ENCODE measurements at regions of chr17 and their contacts with region 1.

Region 1: GRCh38 chr17:80147035-80147836 is at the start of gene EIF4A3:
- DNase-seq: peak; percentile 95
- ATAC-seq: peak; percentile 88
- H3K4me3 Mint-ChIP-seq: peak within 1 kb of the TSS; percentile 98
- H3K27ac Mint-ChIP-seq: peak within 1 kb of the TSS; percentile 90
- H3K4me1 Mint-ChIP-seq: peaks cover 42% of the 10 kb centered on the region
- H3K27me3 Mint-ChIP-seq: no peaks in the 10 kb centered on the region
- CTCF ChIP-seq: no peak
- total RNA-seq, gene EIF4A3: 84.0 and 88.1 TPM in 2 replicates

Region 2: DNA sequence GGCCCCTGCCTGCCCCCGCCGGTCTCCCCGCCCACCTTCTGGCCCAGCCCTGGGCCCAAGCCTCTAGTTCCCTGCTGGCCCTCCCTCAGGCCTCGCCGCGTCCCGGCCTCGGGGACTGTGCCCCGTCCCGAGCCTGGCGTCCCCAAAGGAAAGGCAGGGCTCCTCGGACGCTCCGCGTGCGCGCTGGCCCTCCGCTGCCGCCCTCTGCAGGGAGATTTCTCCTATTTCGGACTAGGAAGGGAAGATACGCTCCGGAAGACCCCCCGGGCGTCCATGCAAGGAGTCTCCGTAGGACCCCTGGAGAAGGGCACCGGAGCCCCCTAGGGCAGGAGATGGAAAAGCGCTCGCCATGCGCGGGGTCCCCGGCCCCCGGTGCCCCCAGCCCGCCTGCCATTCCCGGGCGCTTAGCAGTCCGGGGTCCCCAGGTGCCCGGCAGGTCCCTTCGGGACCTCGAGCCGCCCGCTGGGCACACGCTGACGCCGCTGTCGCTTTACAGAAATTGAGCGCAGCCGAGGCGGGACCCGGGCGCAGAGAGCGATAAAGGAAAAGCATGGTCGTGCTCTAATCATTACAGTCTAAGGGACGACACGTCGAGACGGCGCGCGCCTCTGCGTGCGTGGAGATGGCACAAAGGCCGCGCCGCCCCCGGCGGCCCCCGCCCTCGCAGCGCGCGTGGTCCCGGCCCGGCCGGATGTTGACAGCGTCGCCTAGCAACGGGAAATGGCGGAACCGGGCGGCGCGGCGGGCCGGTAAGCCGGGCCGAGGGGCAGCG is 111.1 kb before region 1 on chr17 and contains the start of gene CCDC40:
- CTCF ChIA-PET with region 1: no interaction called
- POLR2A ChIA-PET with region 1: no interaction called
- intact Hi-C with region 1: loop called (anchors 2 kb)
- DNase-seq: peak; percentile 80
- ATAC-seq: peak; percentile 83
- H3K4me3 Mint-ChIP-seq: peak within 1 kb of the TSS; percentile 89
- H3K27ac Mint-ChIP-seq: peak within 1 kb of the TSS; percentile 86
- H3K4me1 Mint-ChIP-seq: peaks cover 15% of the 10 kb centered on the region
- H3K27me3 Mint-ChIP-seq: peaks cover 3% of the 10 kb centered on the region
- CTCF ChIP-seq: no peak
- total RNA-seq, gene CCDC40: 0.46 and 0.55 TPM in 2 replicates

Region 3: DNA sequence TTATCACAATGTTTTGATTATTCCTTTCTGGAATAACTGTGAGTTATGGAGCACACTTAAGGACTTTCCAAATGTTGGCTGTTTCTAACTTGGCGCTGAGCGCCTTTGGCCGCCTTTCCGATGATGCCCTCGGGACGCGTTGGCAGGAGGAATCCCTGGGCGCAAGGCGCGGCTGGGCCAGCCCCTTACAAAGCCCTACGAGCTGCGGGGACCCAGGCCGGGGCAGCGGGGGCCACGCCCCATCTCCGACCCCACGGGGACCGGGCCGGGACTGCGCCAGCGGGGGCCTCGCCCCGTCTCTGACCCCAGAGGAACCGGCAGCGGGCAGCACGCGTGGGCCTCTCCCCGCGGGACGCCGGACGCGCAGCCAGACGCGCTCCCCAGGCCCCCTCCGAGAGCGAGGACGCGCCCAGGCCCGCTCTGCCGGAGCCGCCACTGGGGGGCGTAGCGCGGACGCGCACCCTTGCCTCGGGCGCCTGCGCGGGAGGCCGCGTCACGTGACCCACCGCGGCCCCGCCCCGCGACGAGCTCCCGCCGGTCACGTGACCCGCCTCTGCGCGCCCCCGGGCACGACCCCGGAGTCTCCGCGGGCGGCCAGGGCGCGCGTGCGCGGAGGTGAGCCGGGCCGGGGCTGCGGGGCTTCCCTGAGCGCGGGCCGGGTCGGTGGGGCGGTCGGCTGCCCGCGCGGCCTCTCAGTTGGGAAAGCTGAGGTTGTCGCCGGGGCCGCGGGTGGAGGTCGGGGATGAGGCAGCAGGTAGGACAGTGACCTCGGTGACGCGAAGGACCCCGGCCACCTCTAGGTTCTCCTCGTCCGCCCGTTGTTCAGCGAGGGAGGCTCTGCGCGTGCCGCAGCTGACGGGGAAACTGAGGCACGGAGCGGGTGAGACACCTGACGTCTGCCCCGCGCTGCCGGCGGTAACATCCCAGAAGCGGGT is 46.0 kb before region 1 on chr17 and contains the start of gene GAA:
- CTCF ChIA-PET with region 1: interaction called, 7 read pairs
- POLR2A ChIA-PET with region 1: interaction called, 11 read pairs
- intact Hi-C with region 1: loop called (anchors 1 kb)
- DNase-seq: peak; percentile 96
- ATAC-seq: peak; percentile 90
- H3K4me3 Mint-ChIP-seq: peak within 1 kb of the TSS; percentile 86
- H3K27ac Mint-ChIP-seq: peak within 1 kb of the TSS; percentile 83
- H3K4me1 Mint-ChIP-seq: peaks cover 23% of the 10 kb centered on the region
- H3K27me3 Mint-ChIP-seq: peaks cover 3% of the 10 kb centered on the region
- CTCF ChIP-seq: peak; percentile 63
- total RNA-seq, gene GAA: 19.6 and 20.2 TPM in 2 replicates

Region 4: DNA sequence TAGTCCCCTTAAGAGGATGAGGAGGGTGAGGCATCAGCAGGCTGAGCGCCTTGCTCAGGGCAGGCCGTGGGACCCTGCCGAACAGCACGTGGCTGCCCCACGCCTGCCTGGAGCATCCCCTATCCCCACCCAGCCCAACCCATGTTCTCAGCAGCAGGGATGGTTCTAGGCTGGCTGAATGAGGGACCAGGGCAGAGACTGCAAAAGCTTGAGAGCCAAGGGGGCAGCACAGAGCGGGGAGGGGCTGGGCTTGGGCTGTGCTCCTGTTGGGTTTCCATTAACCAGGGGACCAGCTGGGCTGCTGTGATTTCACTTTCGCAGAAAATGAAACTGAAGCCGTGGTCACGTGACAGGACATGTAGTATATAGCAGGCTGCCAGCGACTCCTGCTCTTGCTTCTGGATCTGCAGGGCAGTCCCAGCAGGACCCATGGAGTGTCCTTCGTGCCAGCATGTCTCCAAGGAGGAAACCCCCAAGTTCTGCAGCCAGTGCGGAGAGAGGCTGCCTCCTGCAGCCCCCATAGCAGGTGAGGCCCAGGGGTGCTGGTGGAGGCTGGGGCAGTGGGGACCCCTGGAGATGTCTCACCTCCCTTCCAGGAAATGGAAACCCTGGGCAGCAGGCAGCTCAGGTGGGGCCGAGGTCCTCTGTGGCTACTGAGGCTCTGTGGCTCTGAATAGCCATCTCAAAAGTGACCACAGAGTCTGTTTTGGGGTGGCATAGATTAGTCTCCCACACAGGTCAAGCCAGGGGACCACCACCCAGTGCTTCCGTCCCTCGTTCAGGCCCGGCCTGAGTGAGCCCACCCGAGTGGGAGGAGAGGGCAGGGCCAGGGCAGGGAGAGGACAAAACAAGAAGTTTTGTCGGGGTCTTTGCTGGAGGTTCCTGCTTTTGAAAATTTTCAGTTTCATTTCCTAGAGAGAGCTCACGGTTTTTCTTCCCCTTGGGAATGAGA is 116.3 kb after region 1 on chr17:
- CTCF ChIA-PET with region 1: no interaction called
- POLR2A ChIA-PET with region 1: interaction called, 4 read pairs
- intact Hi-C with region 1: loop called (anchors 1 kb)
- DNase-seq: peak; percentile 73
- ATAC-seq: peak; percentile 64
- H3K4me3 Mint-ChIP-seq: peak overlapping the region; percentile 93
- H3K27ac Mint-ChIP-seq: peak overlapping the region; percentile 90
- H3K4me1 Mint-ChIP-seq: peaks cover 64% of the 10 kb centered on the region
- H3K27me3 Mint-ChIP-seq: no peaks in the 10 kb centered on the region
- CTCF ChIP-seq: no peak

Region 5: GRCh38 chr17:80424878-80425697 is 277.9 kb after region 1 on chr17:
- CTCF ChIA-PET with region 1: no interaction called
- POLR2A ChIA-PET with region 1: no interaction called
- intact Hi-C with region 1: no loop called
- DNase-seq: no peak
- ATAC-seq: no peak
- H3K4me3 Mint-ChIP-seq: no peak overlapping the region
- H3K27ac Mint-ChIP-seq: no peak overlapping the region
- H3K4me1 Mint-ChIP-seq: peaks cover 29% of the 10 kb centered on the region
- H3K27me3 Mint-ChIP-seq: no peaks in the 10 kb centered on the region
- CTCF ChIP-seq: no peak

Measured in activated B cell treated with CpG ODN at 0.5 μM for 24 hours (primary cell).